HepG2 (cell line): ENCODE measurements at regions of chr6 and their contacts with region 1.

Region 1: GRCh38 chr6:142692942-142693341 is 252.0 kb downstream of the HIVEP2 start:
- DNase-seq: peak; percentile 62
- ATAC-seq: peak; percentile 84
- H3K4me3 ChIP-seq: no peak overlapping the region
- H3K27ac ChIP-seq: no peak overlapping the region
- H3K4me1 ChIP-seq: peaks cover 20% of the 10 kb centered on the region
- H3K27me3 ChIP-seq: peaks cover 0 to 21% of the 10 kb centered on the region in 2 experiments; a peak in 3 of 5 replicates
- CTCF ChIP-seq: peak; percentile 96
- EP300 ChIP-seq: no peak
- POLR2A ChIP-seq: no peak
- RAD21 ChIP-seq: peak; percentile 93

Region 2: DNA sequence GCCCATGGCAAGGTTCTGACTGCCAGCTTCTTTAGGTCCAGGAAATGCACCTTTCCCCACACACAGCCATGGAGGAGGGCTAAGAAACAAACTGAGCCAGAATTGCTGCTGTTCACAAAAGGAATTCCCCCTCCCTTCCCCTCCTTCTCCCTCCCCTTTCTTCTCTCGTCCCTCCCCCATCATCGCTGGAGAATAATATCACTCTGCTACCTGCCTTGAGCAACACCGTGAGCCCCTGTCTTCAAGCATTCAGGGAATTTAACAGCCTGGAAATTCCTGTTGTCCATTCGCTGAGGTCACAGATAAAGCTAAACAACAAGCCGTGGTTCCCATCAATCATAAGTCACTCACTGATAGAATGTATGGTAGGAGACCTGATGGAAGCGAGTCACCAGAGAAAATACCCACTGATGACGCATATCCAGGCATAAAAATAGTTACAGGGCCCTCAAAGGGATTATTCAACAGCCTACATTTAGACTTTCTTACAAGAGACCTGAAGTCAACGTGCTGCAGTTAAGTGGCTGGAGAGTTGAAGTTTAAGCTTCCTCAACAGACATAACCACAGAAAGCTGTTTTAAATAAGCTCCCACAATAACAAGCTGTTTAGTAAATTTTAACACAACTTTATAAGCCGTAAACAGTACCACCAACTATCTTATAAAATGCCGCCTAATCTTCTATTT is 192.4 kb after region 1 on chr6:
- CTCF ChIA-PET with region 1: interaction called, 4 read pairs
- POLR2A ChIA-PET with region 1: no interaction called
- in situ Hi-C with region 1: no loop called
- intact Hi-C with region 1: loop called (anchors 2 kb)
- DNase-seq: peak; percentile 84
- ATAC-seq: peak; percentile 60
- H3K4me3 ChIP-seq: no peak overlapping the region
- H3K27ac ChIP-seq: no peak overlapping the region
- H3K4me1 ChIP-seq: peaks cover 27% of the 10 kb centered on the region
- H3K27me3 ChIP-seq: no peaks in the 10 kb centered on the region
- CTCF ChIP-seq: no peak
- EP300 ChIP-seq: no peak
- POLR2A ChIP-seq: no peak
- RAD21 ChIP-seq: no peak

Region 3: GRCh38 chr6:142946181-142946923 is 253.4 kb after region 1 on chr6:
- CTCF ChIA-PET with region 1: no interaction called
- POLR2A ChIA-PET with region 1: no interaction called
- in situ Hi-C with region 1: no loop called
- intact Hi-C with region 1: loop called (anchors 2 kb)
- DNase-seq: peak; percentile 87
- ATAC-seq: peak; percentile 69
- H3K4me3 ChIP-seq: peak overlapping the region; percentile 66 to 99 (median 78)
- H3K27ac ChIP-seq: peak overlapping the region; percentile 97
- H3K4me1 ChIP-seq: peaks cover 35% of the 10 kb centered on the region
- H3K27me3 ChIP-seq: peaks cover 0 to 10% of the 10 kb centered on the region in 2 experiments; a peak in 3 of 5 replicates
- CTCF ChIP-seq: peak; percentile 17
- EP300 ChIP-seq: 0 out of 4 replicates have a peak, but pooled peaks of 1 of the 2 experiments have one; percentile 8
- POLR2A ChIP-seq: peak; percentile 63 to 72
- RAD21 ChIP-seq: 0 out of 2 replicates have a peak, but pooled peaks have one; percentile 1

Region 4: DNA sequence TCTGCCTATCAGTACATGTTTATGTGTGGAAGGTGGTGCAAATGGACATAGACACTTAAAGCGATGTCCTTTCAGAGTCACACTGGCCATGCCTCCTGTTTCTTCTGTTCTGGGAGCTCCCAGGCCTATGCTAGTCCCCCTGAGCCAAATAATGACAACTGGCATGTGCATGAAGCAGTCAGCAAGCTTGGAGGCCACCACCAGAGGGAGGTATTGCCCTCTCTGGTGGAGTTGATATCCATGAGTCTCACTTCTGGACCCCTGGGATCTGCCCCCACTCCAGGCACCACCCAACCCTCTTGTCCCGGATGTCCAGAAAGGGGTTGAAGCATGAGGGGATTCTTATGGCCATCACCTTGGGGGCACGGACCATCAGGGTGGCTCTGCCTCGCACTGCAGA is 539.9 kb after region 1 on chr6:
- CTCF ChIA-PET with region 1: interaction called, 4 read pairs
- POLR2A ChIA-PET with region 1: no interaction called
- in situ Hi-C with region 1: no loop called
- intact Hi-C with region 1: loop called (anchors 1 kb)
- DNase-seq: peak; percentile 65
- ATAC-seq: peak; percentile 98
- H3K4me3 ChIP-seq: no peak overlapping the region
- H3K27ac ChIP-seq: no peak overlapping the region
- H3K4me1 ChIP-seq: no peaks in the 10 kb centered on the region
- H3K27me3 ChIP-seq: no peaks in the 10 kb centered on the region
- CTCF ChIP-seq: peak; percentile 88
- EP300 ChIP-seq: no peak
- POLR2A ChIP-seq: no peak
- RAD21 ChIP-seq: peak; percentile 86

Region 5: GRCh38 chr6:143337201-143337949 is 644.4 kb after region 1 on chr6:
- CTCF ChIA-PET with region 1: no interaction called
- POLR2A ChIA-PET with region 1: no interaction called
- in situ Hi-C with region 1: no loop called
- intact Hi-C with region 1: loop called (anchors 5 kb)
- DNase-seq: peak; percentile 16
- ATAC-seq: peak; percentile 92
- H3K4me3 ChIP-seq: no peak overlapping the region
- H3K27ac ChIP-seq: no peak overlapping the region
- H3K4me1 ChIP-seq: no peaks in the 10 kb centered on the region
- H3K27me3 ChIP-seq: no peaks in the 10 kb centered on the region
- CTCF ChIP-seq: peak; percentile 81
- EP300 ChIP-seq: no peak
- POLR2A ChIP-seq: no peak
- RAD21 ChIP-seq: peak; percentile 53

Region 6: DNA sequence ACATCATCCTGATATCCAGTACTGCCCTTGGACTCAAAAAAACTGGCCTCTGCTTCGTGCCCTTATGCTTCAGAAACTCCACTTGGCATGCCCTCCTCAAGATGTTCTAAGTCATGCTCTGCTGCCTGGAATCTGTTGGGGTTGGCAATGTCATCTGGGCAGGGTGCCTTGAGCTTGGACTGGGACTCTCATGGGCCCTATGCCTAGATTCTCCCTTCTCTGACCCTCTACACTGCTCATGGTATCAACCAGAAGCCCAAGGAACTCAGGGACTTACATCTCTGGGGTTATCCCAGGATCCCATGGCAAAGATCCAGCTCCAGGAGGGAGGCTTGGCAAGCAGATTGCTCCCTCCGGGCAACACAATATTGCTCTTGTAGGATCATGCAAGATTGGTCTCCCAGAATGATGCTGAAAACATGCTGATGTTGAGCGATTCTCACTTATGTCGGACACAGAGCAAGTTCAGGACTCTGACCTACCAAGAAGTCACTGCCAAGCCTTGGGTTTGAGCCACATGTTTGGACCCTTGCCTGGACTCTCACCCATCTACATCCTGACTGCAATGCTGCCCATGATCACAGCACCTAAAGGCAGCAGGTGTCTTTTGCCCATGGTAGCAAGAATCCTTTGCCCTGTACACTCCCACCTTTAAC is 668.7 kb after region 1 on chr6:
- CTCF ChIA-PET with region 1: no interaction called
- POLR2A ChIA-PET with region 1: no interaction called
- in situ Hi-C with region 1: no loop called
- intact Hi-C with region 1: no loop called
- DNase-seq: no peak
- ATAC-seq: no peak; the same call in 2 of the 3 replicates
- H3K4me3 ChIP-seq: no peak overlapping the region
- H3K27ac ChIP-seq: no peak overlapping the region
- H3K4me1 ChIP-seq: no peaks in the 10 kb centered on the region
- H3K27me3 ChIP-seq: no peaks in the 10 kb centered on the region
- CTCF ChIP-seq: no peak
- EP300 ChIP-seq: no peak
- POLR2A ChIP-seq: no peak
- RAD21 ChIP-seq: no peak

Region 7: GRCh38 chr6:143419526-143419925 is 726.6 kb after region 1 on chr6:
- CTCF ChIA-PET with region 1: no interaction called
- POLR2A ChIA-PET with region 1: no interaction called
- in situ Hi-C with region 1: loop called (anchors 5 kb)
- intact Hi-C with region 1: loop called (anchors 5 kb)
- DNase-seq: no peak
- ATAC-seq: no peak
- H3K4me3 ChIP-seq: no peak overlapping the region
- H3K27ac ChIP-seq: no peak overlapping the region
- H3K4me1 ChIP-seq: no peaks in the 10 kb centered on the region
- H3K27me3 ChIP-seq: no peaks in the 10 kb centered on the region
- CTCF ChIP-seq: no peak
- EP300 ChIP-seq: no peak
- POLR2A ChIP-seq: no peak
- RAD21 ChIP-seq: no peak